ENCODE measurements at regions of chr19 and their contacts with region 1.

Region 1: GRCh38 chr19:3075895-3076431 is 13.7 kb upstream of the TLE5 start:
- DNase-seq: peak; percentile 72
- H3K4me3 ChIP-seq: no peak overlapping the region
- H3K27ac ChIP-seq: no peak overlapping the region
- H3K4me1 ChIP-seq: peaks cover 8% of the 10 kb centered on the region
- H3K27me3 ChIP-seq: no peaks in the 10 kb centered on the region
- CTCF ChIP-seq: peak; percentile 88 to 99 (median 94)
- POLR2A ChIP-seq: no peak

Region 2: DNA sequence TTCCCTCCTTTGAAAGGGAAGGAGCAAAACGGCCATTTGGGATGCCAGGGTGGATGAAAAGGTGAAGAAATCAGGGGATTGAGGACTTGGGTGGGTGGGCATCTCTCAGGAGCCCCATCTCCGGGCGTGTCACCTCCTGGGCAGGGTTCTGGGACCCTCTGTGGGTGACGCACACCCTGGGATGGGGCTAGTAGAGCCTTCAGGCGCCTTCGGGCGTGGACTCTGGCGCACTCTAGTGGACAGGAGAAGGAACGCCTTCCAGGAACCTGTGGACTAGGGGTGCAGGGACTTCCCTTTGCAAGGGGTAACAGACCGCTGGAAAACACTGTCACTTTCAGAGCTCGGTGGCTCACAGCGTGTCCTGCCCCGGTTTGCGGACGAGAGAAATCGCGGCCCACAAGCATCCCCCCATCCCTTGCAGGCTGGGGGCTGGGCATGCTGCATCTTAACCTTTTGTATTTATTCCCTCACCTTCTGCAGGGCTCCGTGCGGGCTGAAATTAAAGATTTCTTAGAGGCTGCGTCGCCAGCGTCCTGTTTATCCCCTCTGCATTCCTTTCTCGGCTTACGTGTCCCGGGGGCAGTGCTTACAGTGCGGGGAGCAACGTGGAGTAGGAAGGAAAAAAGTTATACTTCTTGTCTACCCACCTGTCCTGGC is 87.4 kb after region 1 on chr19:
- intact Hi-C with region 1: loop called (anchors 10 kb)
- DNase-seq: peak; percentile 66
- H3K4me3 ChIP-seq: peak overlapping the region; percentile 30 to 36
- H3K27ac ChIP-seq: no peak overlapping the region
- H3K4me1 ChIP-seq: peaks cover 4% of the 10 kb centered on the region
- H3K27me3 ChIP-seq: no peaks in the 10 kb centered on the region
- CTCF ChIP-seq: peak; percentile 70 to 84 (median 81)
- POLR2A ChIP-seq: no peak

Measured in testis (tissue), 5 donors.